Naive thymus-derived CD8-positive, alpha-beta T cell (primary cell): ENCODE measurements at regions of chr5 and their contacts with region 1.

Region 1: DNA sequence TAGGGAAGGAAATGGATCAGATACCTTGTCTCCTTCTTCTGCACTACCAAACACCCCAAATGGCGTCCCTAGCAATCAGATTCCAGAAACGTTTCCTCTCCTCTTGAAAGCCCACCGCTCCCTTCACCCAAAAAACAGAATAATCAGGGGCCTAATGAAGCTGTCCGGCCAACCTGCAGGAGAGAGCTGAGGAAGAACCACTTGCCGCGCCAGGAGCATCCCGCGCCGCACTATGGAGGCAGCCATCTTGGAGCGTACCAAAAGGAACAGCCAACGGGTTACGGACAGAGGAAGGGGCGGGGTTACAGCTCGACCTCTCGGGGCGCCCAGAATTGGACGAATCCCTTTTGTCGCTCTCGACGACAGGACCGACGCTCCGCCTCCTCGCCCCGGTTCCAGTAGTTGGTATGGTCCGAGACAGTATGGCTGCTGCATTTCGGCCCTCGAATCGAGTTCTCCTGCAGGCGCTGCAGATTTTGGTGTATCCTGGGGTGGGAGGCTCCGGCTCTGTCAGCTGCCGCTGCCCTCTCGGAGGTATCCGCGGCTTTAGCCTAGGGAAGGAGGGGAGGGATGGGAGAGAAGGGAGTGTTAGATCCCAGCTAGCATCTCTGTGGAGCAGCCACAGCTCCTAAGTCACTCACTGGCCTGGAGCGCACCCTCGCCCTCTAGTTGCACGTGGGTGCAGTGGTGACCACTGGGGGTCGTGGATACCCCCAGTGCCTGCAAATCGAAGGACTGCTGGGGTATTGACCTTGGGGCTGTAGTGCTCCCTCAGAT is at the starts of genes MRPS27 and PTCD2:
- DNase-seq: peak; percentile 81 to 98 (median 92)
- ATAC-seq: peak; percentile 99
- H3K4me3 Mint-ChIP-seq: peak within 1 kb of the TSS; percentile 92 to 99 (median 98)
- H3K27ac Mint-ChIP-seq: peak within 1 kb of the TSS; percentile 93 to 99 (median 96)
- H3K4me1 Mint-ChIP-seq: peaks cover 9 to 55% (median 51%) of the 10 kb centered on the region in 4 donors
- H3K27me3 Mint-ChIP-seq: no peaks in the 10 kb centered on the region
- polyA plus RNA-seq, gene MRPS27: 31.7 to 43.6 (median 36.0) TPM
- polyA plus RNA-seq, gene PTCD2: 4.0 to 6.1 (median 5.9) TPM

Region 2: GRCh38 chr5:72307968-72308852 is 12.0 kb before region 1 on chr5:
- POLR2A ChIA-PET with region 1: interaction called, 50 read pairs
- DNase-seq: peak; percentile 92 to 96 (median 94)
- ATAC-seq: peak; percentile 95 to 96
- H3K4me3 Mint-ChIP-seq: peak overlapping the region; percentile 80 to 95 (median 90)
- H3K27ac Mint-ChIP-seq: peak overlapping the region; percentile 82 to 96 (median 92)
- H3K4me1 Mint-ChIP-seq: peaks cover 15 to 35% (median 31%) of the 10 kb centered on the region in 4 donors
- H3K27me3 Mint-ChIP-seq: no peaks in the 10 kb centered on the region

Region 3: DNA sequence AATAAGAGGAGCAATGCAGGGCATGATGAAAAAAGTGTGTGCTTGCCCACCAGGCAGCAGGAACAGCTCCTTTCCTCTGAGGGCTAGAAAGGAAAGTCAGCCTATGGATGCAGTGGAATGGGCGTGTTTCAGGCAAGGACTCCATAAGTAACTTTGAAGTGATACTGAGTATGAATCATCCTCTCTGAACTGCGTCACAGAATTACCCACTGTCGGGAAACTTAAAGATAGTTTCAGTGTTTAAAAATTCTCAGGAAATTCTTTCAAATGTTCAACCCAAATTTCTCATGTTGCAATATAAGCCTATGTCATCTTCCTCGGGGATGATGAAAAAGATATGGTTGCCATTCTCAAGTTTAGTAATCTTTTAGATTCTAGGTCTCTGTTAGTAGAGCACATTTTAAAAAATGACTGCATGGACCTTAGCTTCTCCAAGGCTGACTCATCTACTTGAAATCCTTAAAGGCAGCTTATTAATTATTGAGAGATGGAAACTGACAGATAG is 27.7 kb after region 1 on chr5:
- POLR2A ChIA-PET with region 1: no interaction called
- DNase-seq: no peak
- ATAC-seq: no peak
- H3K4me3 Mint-ChIP-seq: no peak overlapping the region
- H3K27ac Mint-ChIP-seq: no peak overlapping the region
- H3K4me1 Mint-ChIP-seq: peaks cover 0 to 12% (median 9%) of the 10 kb centered on the region in 4 donors
- H3K27me3 Mint-ChIP-seq: no peaks in the 10 kb centered on the region